ENCODE measurements at regions of chr17 and their contacts with region 1.

Region 1: DNA sequence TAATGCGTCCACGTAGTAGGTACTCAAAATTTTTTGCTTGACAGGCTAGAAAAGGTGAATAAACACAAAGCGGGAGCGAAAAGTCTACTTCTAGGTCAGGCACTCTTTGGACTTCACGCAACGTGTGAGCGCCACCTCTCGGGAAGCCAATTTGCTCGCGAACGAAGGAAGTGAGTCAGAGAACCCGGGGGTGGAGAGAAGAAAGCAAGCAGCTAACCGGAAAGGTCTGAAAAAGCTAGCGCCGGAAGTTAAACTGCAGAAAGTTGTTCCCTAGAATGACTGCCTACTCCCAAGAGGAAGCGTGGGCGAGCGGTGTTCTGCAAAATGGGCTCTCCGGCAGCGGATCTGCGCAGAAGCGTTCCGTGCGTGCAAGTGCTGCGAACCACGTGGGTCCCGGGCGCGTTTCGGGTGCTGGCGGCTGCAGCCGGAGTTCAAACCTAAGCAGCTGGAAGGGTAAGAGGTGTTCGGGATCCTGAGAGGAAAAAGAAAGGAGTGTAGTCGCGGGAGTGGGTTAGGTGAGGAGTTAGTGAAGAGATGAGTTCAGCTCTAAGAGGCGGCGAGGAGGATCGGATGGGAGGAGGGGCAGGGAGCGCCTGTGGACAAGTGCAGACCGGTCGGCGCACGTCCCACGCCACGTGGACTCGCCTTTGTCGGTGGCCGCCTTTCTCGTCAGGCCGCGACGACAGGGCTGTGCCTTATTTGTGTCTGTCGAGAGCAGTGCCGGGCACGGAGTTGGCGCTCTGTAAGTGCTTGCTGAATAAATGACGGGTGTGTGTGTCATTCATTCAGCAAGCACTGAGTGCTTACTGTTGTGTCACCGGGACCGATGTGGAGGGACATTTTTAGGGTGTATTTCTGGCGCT is at the start of gene NME1:
- DNase-seq: peak; percentile 94
- ATAC-seq: peak; percentile 98 to 99
- total RNA-seq, gene NME1: 37.8 to 63.8 TPM

Region 2: GRCh38 chr17:51000835-51001638 is 152.4 kb before region 1 on chr17:
- intact Hi-C with region 1: loop called (anchors 2 to 5 kb)
- DNase-seq: no peak
- ATAC-seq: peak; percentile 57 to 71

Region 3: GRCh38 chr17:51119425-51120356 is 33.8 kb before region 1 on chr17:
- intact Hi-C with region 1: loop called in 1 of 2 experiments (anchors 2 kb)
- DNase-seq: peak; percentile 48
- ATAC-seq: peak; percentile 21 to 30